ENCODE measurements at regions of chr1 and their contacts with region 1.

Region 1: DNA sequence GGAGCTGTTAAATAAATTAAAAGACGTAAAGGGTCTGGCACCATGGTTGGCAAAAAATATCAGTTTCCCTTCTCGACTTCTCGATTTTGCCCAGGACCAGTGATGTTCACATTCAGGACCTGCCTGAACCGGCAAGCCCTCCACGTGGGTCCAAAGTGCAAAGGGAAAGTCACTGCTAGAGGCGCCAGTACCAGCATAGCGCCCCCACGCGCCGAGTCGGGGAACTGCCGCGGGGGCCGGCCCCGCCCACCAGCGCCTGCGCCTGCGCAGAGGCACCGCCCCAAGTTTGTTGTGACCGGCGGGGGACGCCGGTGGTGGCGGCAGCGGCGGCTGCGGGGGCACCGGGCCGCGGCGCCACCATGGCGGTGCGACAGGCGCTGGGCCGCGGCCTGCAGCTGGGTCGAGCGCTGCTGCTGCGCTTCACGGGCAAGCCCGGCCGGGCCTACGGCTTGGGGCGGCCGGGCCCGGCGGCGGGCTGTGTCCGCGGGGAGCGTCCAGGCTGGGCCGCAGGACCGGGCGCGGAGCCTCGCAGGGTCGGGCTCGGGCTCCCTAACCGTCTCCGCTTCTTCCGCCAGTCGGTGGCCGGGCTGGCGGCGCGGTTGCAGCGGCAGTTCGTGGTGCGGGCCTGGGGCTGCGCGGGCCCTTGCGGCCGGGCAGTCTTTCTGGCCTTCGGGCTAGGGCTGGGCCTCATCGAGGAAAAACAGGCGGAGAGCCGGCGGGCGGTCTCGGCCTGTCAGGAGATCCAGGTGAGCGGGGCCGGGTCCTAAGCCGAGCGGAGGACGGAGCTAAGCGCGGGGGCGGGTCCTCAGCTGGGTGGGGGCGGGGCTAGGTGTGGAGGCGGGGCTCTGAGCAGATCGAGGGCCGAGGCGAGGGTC is at the start of gene PINK1:
- DNase-seq: peak; percentile 94
- total RNA-seq, gene PINK1: 224 TPM

Region 2: DNA sequence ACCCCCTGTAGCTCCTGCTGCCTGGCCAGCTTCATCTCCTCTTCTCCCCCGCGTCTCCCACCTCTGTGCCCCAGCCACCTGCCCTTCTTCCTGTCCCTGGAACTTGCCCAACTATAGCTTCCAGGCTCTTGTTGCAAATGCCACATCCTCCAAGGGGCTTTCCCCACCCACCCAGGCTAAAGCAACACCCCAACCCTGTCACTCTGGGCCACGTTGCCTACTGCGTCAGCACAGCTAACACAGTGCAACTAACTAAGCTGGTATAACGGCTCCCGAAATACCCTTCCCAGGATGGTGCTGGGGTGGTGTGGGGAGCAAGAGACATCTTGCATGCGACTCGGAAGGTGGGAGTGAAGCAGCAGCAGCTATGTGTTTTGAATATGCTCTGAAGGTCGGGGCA is 167.2 kb before region 1 on chr1:
- intact Hi-C with region 1: no loop called
- DNase-seq: no peak

Region 3: GRCh38 chr1:20574686-20575540 is 58.5 kb before region 1 on chr1:
- intact Hi-C with region 1: loop called (anchors 2 kb)
- DNase-seq: peak; percentile 94

Measured in cardiac septum (tissue), 1 donor.